ENCODE measurements at regions of chr7 and their contacts with region 1.

Region 1: GRCh38 chr7:18313965-18314364 is 181.6 kb upstream of the HDAC9 start:
- DNase-seq: no peak
- ATAC-seq: no peak
- H3K4me3 ChIP-seq: no peak overlapping the region
- H3K4me3 Mint-ChIP-seq: no peak overlapping the region
- H3K27ac ChIP-seq: no peak overlapping the region
- H3K27ac Mint-ChIP-seq: no peak overlapping the region
- H3K4me1 ChIP-seq: peaks cover 9 to 31% of the 10 kb centered on the region in 2 donors
- H3K4me1 Mint-ChIP-seq: peaks cover 50% of the 10 kb centered on the region
- H3K27me3 ChIP-seq: no peaks in the 10 kb centered on the region
- H3K27me3 Mint-ChIP-seq: no peaks in the 10 kb centered on the region
- CTCF ChIP-seq: no peak

Region 2: GRCh38 chr7:18295781-18296423 is 18.1 kb before region 1 on chr7:
- CTCF ChIA-PET with region 1: interaction called, 7 read pairs
- POLR2A ChIA-PET with region 1: no interaction called
- intact Hi-C with region 1: loop called (anchors 2 kb)
- DNase-seq: peak; percentile 45
- ATAC-seq: peak; percentile 61
- H3K4me3 ChIP-seq: peak overlapping the region in 3 of 5 experiments; percentile 5 to 36 (median 21)
- H3K4me3 Mint-ChIP-seq: peak overlapping the region; percentile 74
- H3K27ac ChIP-seq: peak overlapping the region; percentile 30 to 73
- H3K27ac Mint-ChIP-seq: peak overlapping the region; percentile 66
- H3K4me1 ChIP-seq: peaks cover 42 to 54% of the 10 kb centered on the region in 2 donors
- H3K4me1 Mint-ChIP-seq: peaks cover 69% of the 10 kb centered on the region
- H3K27me3 ChIP-seq: no peaks in the 10 kb centered on the region
- H3K27me3 Mint-ChIP-seq: no peaks in the 10 kb centered on the region
- CTCF ChIP-seq: peak; percentile 16

Region 3: GRCh38 chr7:18330548-18330947 is 16.6 kb after region 1 on chr7:
- CTCF ChIA-PET with region 1: interaction called, 6 read pairs
- POLR2A ChIA-PET with region 1: no interaction called
- intact Hi-C with region 1: loop called (anchors 2 kb)
- DNase-seq: peak; percentile 27
- ATAC-seq: peak; percentile 47
- H3K4me3 ChIP-seq: peak overlapping the region in 2 of 5 experiments; percentile 12 to 21
- H3K4me3 Mint-ChIP-seq: peak overlapping the region; percentile 38
- H3K27ac ChIP-seq: peak overlapping the region; percentile 60 to 82
- H3K27ac Mint-ChIP-seq: peak overlapping the region; percentile 78
- H3K4me1 ChIP-seq: peaks cover 26 to 51% of the 10 kb centered on the region in 2 donors
- H3K4me1 Mint-ChIP-seq: peaks cover 54% of the 10 kb centered on the region
- H3K27me3 ChIP-seq: no peaks in the 10 kb centered on the region
- H3K27me3 Mint-ChIP-seq: no peaks in the 10 kb centered on the region
- CTCF ChIP-seq: no peak